Activated B cell treated with CpG ODN at 0.5 μM for 24 hours (primary cell): ENCODE measurements at regions of chr2 and their contacts with region 1.

Region 1: GRCh38 chr2:234500394-234501006 is 3.6 kb upstream of the ARL4C start:
- DNase-seq: peak; percentile 58
- ATAC-seq: peak; percentile 68
- H3K4me3 Mint-ChIP-seq: no peak overlapping the region
- H3K27ac Mint-ChIP-seq: no peak overlapping the region
- H3K4me1 Mint-ChIP-seq: peaks cover 26% of the 10 kb centered on the region
- H3K27me3 Mint-ChIP-seq: peaks cover 18% of the 10 kb centered on the region
- CTCF ChIP-seq: peak; percentile 39

Region 2: DNA sequence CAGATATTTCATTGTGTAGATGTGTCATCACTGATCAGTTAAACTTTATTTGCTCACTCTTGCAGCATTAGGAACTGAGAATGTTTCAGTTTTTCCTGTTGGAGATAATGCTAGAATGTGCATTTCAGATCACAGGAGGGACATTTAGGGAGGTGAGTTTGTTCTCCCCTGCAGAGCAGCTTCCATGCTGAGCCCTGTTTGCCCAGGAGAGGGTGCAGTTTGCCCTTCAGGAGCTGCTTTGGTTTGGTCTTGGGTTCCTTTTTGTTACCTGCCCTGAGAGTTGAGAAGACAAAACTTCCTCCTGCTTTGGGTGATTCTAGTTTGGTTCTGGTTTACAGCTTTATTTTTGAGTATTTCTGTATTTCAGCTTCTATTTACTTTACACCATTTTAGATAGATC is 1096.3 kb before region 1 on chr2:
- CTCF ChIA-PET with region 1: no interaction called
- POLR2A ChIA-PET with region 1: no interaction called
- intact Hi-C with region 1: loop called (anchors 1 kb)
- DNase-seq: no peak
- ATAC-seq: peak; percentile 92
- H3K4me3 Mint-ChIP-seq: no peak overlapping the region
- H3K27ac Mint-ChIP-seq: peak overlapping the region; percentile 82
- H3K4me1 Mint-ChIP-seq: peaks cover 57% of the 10 kb centered on the region
- H3K27me3 Mint-ChIP-seq: no peaks in the 10 kb centered on the region
- CTCF ChIP-seq: no peak

Region 3: GRCh38 chr2:234135720-234136221 is 364.7 kb before region 1 on chr2:
- CTCF ChIA-PET with region 1: interaction called, 117 read pairs
- POLR2A ChIA-PET with region 1: interaction called, 11 read pairs
- intact Hi-C with region 1: loop called (anchors 1 kb)
- DNase-seq: peak; percentile 32
- ATAC-seq: peak; percentile 75
- H3K4me3 Mint-ChIP-seq: no peak overlapping the region
- H3K27ac Mint-ChIP-seq: peak overlapping the region; percentile 20
- H3K4me1 Mint-ChIP-seq: peaks cover 8% of the 10 kb centered on the region
- H3K27me3 Mint-ChIP-seq: peaks cover 30% of the 10 kb centered on the region
- CTCF ChIP-seq: no peak

Region 4: GRCh38 chr2:234308813-234309195 is 191.7 kb before region 1 on chr2:
- CTCF ChIA-PET with region 1: interaction called, 4 read pairs
- POLR2A ChIA-PET with region 1: interaction called, 24 read pairs
- intact Hi-C with region 1: loop called (anchors 1 kb)
- DNase-seq: peak; percentile 43
- ATAC-seq: peak; percentile 93
- H3K4me3 Mint-ChIP-seq: peak overlapping the region; percentile 50
- H3K27ac Mint-ChIP-seq: peak overlapping the region; percentile 74
- H3K4me1 Mint-ChIP-seq: peaks cover 35% of the 10 kb centered on the region
- H3K27me3 Mint-ChIP-seq: peaks cover 33% of the 10 kb centered on the region
- CTCF ChIP-seq: no peak

Region 5: GRCh38 chr2:234446404-234447076 is 54.0 kb before region 1 on chr2:
- CTCF ChIA-PET with region 1: interaction called, 10 read pairs
- POLR2A ChIA-PET with region 1: interaction called, 25 read pairs
- intact Hi-C with region 1: loop called (anchors 1 kb)
- DNase-seq: peak; percentile 68
- ATAC-seq: peak; percentile 93
- H3K4me3 Mint-ChIP-seq: peak overlapping the region; percentile 66
- H3K27ac Mint-ChIP-seq: peak overlapping the region; percentile 96
- H3K4me1 Mint-ChIP-seq: peaks cover 83% of the 10 kb centered on the region
- H3K27me3 Mint-ChIP-seq: no peaks in the 10 kb centered on the region
- CTCF ChIP-seq: no peak

Region 6: GRCh38 chr2:234544659-234545611 is 44.4 kb after region 1 on chr2:
- CTCF ChIA-PET with region 1: interaction called, 8 read pairs
- POLR2A ChIA-PET with region 1: no interaction called
- intact Hi-C with region 1: loop called (anchors 2 kb)
- DNase-seq: peak; percentile 56
- ATAC-seq: peak; percentile 84
- H3K4me3 Mint-ChIP-seq: no peak overlapping the region
- H3K27ac Mint-ChIP-seq: no peak overlapping the region
- H3K4me1 Mint-ChIP-seq: no peaks in the 10 kb centered on the region
- H3K27me3 Mint-ChIP-seq: peaks cover 37% of the 10 kb centered on the region
- CTCF ChIP-seq: peak; percentile 33